Activated CD4-positive, alpha-beta memory T cell treated with anti-CD3 and anti-CD28 coated beads, Interleukin-2, amount 10 ng/mL, durations not matched to agents 7 days and 5 days (primary cell): ENCODE measurements at regions of chr16 and their contacts with region 1.

Region 1: GRCh38 chr16:20300312-20301097 is 26.8 kb downstream of the GP2 start:
- DNase-seq: peak; percentile 41
- H3K4me3 Mint-ChIP-seq: no peak overlapping the region
- H3K27ac Mint-ChIP-seq: no peak overlapping the region
- H3K4me1 Mint-ChIP-seq: no peaks in the 10 kb centered on the region
- H3K27me3 Mint-ChIP-seq: peaks cover 3% of the 10 kb centered on the region

Region 2: GRCh38 chr16:19898924-19899604 is 401.4 kb before region 1 on chr16:
- CTCF ChIA-PET with region 1: interaction called, 16 read pairs
- POLR2A ChIA-PET with region 1: no interaction called
- DNase-seq: peak; percentile 46
- H3K4me3 Mint-ChIP-seq: no peak overlapping the region
- H3K27ac Mint-ChIP-seq: no peak overlapping the region
- H3K4me1 Mint-ChIP-seq: no peaks in the 10 kb centered on the region
- H3K27me3 Mint-ChIP-seq: peaks cover 2% of the 10 kb centered on the region

Region 3: DNA sequence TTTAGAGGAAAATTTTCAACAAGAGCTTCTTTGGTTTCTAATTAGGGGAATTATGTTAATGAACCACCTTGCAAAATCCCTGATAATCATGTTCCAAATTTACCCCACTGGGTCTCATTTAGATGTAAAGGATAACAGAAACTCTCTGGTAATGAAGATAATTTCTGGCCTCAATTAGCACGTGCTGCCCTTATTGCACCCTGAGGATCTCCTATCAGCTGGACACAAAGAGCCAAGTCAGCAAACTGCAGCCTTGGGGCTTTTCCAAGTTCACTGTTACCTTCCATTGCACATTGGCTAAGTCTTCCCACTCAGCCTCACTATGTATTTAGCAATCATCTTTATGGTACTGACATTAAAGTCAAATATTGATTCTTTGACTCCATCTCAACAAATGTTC is 51.3 kb before region 1 on chr16:
- CTCF ChIA-PET with region 1: no interaction called
- POLR2A ChIA-PET with region 1: no interaction called
- DNase-seq: no peak
- H3K4me3 Mint-ChIP-seq: no peak overlapping the region
- H3K27ac Mint-ChIP-seq: no peak overlapping the region
- H3K4me1 Mint-ChIP-seq: no peaks in the 10 kb centered on the region
- H3K27me3 Mint-ChIP-seq: peaks cover 2% of the 10 kb centered on the region

Region 4: GRCh38 chr16:20271893-20272292 is 28.6 kb before region 1 on chr16:
- CTCF ChIA-PET with region 1: no interaction called
- POLR2A ChIA-PET with region 1: no interaction called
- DNase-seq: no peak
- H3K4me3 Mint-ChIP-seq: no peak overlapping the region
- H3K27ac Mint-ChIP-seq: no peak overlapping the region
- H3K4me1 Mint-ChIP-seq: no peaks in the 10 kb centered on the region
- H3K27me3 Mint-ChIP-seq: no peaks in the 10 kb centered on the region